ENCODE measurements at regions of chr1 and their contacts with region 1.

Region 1: DNA sequence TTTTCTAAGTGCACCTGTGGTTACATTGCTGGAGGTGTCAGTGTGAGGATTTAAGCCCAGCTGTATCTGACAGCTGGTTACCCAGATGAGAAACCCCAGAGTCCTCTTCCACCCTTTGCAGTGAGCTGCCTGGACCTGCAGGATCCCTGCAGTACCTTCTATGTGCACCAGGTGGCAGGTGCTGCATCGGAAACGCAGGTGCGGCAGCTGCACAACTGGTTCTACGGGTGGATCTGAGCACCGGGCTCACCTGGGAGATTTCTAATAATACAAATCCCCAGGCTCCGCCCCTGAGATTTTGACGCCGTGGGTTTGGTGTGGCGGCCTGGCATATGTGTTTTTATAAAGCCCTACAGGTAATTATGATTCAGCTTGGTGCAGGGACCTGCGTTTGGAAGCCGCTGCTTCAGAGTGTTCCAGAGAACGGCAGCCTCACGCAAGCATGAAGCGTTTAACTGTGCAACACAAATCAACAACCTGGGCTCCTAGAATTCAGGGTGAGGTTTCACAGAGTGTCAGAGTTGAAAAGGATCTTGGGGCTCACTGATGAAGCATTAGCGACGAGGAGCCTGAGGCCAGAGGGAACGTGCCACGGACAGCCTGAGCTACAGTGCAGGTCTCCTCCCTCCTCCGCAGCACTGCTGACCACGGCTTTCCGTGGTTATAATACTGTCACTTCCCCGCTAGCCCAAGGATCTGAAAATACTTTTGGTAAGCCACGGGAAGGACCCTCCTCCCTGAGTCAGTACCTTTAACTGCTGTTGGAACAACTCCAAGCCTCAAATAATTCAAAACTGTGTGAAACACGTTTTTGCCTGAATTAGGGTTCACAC is 96.7 kb upstream of the TRABD2B start:
- DNase-seq: peak; percentile 88
- H3K4me3 Mint-ChIP-seq: peak overlapping the region; percentile 42
- H3K27ac Mint-ChIP-seq: no peak overlapping the region
- H3K4me1 Mint-ChIP-seq: peaks cover 5% of the 10 kb centered on the region
- H3K27me3 Mint-ChIP-seq: peaks cover 45% of the 10 kb centered on the region

Region 2: DNA sequence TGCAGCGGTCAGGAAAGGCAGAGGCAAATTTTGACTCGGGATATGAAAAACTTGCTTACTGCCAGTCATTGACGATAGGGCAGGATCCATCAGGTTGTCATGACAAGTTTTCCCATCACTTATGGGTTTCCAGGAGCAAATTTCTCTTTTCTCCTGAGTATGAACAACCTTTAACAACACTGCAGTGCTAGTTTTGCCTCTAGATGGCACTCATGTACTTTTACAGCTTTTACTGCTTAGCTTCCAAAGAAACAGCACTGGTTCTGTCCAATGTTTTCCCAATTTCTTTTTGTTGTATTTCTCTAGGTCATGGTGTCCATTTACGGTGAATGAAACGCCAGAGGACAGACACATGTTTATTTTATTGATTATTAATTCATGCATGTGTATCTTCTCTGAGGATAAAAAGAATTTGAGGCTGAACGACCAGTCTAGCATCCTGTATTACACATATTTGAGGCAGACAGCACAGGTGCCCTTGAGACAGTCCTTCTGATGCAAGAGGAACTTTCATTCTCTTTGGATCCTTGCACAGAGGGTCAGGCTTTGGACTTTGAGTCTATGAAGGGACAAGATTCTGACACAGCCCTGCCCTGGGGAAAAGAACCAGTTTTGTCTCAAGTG is 15.6 kb after region 1 on chr1:
- CTCF ChIA-PET with region 1: no interaction called
- intact Hi-C with region 1: loop called (anchors 1 kb)
- DNase-seq: peak; percentile 17
- H3K4me3 Mint-ChIP-seq: no peak overlapping the region
- H3K27ac Mint-ChIP-seq: no peak overlapping the region
- H3K4me1 Mint-ChIP-seq: peaks cover 4% of the 10 kb centered on the region
- H3K27me3 Mint-ChIP-seq: peaks cover 20% of the 10 kb centered on the region

Region 3: GRCh38 chr1:48127735-48128685 is 34.1 kb after region 1 on chr1:
- CTCF ChIA-PET with region 1: no interaction called
- intact Hi-C with region 1: no loop called
- DNase-seq: no peak
- H3K4me3 Mint-ChIP-seq: no peak overlapping the region
- H3K27ac Mint-ChIP-seq: no peak overlapping the region
- H3K4me1 Mint-ChIP-seq: no peaks in the 10 kb centered on the region
- H3K27me3 Mint-ChIP-seq: peaks cover 23% of the 10 kb centered on the region

Region 4: GRCh38 chr1:49125746-49126145 is 1031.8 kb after region 1 on chr1:
- CTCF ChIA-PET with region 1: no interaction called
- intact Hi-C with region 1: no loop called
- DNase-seq: no peak
- H3K4me3 Mint-ChIP-seq: no peak overlapping the region
- H3K27ac Mint-ChIP-seq: no peak overlapping the region
- H3K4me1 Mint-ChIP-seq: no peaks in the 10 kb centered on the region
- H3K27me3 Mint-ChIP-seq: peaks cover 1% of the 10 kb centered on the region